Ascending aorta (tissue), 2 donors: ENCODE measurements at regions of chr17 and their contacts with region 1.

Region 1: GRCh38 chr17:40062329-40063186 is at the start of gene THRA:
- DNase-seq: peak in 1 of 2 donors; percentile 83
- H3K4me3 ChIP-seq: peak within 1 kb of the TSS; percentile 93 to 100
- H3K27ac ChIP-seq: peak within 1 kb of the TSS; percentile 86 to 91
- H3K4me1 ChIP-seq: peaks cover 10 to 33% of the 10 kb centered on the region in 2 donors
- H3K27me3 ChIP-seq: no peaks in the 10 kb centered on the region
- CTCF ChIP-seq: peak in 1 of 3 experiments; percentile 39
- total RNA-seq, gene THRA: 35.4 TPM

Region 2: DNA sequence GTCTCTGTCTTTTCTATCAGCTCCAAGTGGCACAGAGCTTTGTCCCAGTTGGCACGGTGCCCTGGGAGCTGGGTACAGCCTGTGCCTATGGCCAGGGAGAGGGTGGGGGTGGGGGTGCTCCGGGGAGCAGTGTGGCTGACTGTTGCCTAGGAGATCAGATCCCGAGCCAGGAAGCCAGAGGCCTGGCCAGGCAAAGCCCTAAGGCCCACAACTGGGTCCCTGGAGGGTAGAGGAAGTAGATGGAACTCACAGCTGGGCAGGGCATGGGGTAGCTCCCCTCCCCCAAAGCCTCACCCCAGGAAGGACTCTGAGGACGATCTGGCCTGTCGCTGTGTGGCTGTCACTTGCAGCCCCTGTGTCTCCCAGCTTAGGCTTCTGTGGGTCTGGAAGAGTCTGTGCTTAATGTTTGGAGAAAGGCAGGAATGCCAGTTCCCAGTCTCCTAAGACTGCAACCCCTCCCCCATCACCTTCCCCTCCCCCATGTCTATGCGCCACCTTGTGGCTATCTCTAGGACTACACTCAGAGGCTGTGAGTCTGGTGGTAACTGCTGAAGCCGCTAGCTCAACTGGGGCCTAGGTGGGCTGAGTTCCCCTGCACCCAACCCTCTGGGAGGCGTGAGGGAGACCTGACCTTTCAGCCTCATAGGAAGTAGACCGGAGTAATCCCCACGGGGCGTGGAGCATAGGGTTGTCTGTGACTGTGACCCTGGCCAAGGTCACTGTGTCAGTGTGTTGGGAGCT is 12.8 kb after region 1 on chr17:
- intact Hi-C with region 1: loop called (anchors 1 kb)
- DNase-seq: peak; percentile 73 to 94
- H3K4me3 ChIP-seq: peak overlapping the region; percentile 23 to 54
- H3K27ac ChIP-seq: peak overlapping the region; percentile 91
- H3K4me1 ChIP-seq: peaks cover 45 to 69% of the 10 kb centered on the region in 2 donors
- H3K27me3 ChIP-seq: no peaks in the 10 kb centered on the region
- CTCF ChIP-seq: peak; percentile 81 to 95 (median 94)

Region 3: DNA sequence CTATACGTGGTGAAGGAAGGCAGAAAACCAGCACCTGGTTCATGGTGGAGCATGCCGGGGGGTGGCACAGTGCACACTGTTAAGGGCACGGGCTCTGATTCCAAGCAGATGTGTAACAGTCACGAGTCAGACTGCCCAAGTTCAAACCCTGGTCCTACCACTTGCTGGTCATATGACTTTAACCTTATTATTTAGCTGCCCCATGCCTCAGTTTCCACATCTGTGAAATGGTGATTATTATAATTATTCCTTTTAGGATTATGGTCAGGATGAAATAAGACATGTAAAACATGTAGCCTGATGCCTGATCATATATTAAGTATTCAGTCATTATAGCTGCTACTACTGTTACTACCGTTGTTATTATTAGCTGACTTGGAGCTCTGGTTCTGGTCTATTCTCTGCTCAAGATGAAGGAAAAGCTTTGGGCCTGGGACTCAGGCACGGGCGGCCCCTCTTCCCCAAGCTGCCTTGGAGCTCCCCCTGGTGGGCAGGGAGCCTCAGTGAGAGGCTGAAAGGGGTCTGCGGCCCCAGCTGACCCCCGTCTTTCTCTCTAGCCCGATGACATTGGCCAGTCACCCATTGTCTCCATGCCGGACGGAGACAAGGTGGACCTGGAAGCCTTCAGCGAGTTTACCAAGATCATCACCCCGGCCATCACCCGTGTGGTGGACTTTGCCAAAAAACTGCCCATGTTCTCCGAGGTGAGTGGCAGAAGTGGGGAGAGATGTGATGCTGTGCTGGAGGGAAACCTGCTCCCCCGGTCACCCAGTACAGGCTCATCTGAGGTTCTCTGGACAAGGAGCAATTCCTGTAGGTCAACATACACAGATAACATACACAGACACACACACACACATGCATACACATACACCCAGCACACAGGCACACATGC is 23.8 kb after region 1 on chr17:
- intact Hi-C with region 1: loop called (anchors 1 kb)
- DNase-seq: no peak
- H3K4me3 ChIP-seq: no peak overlapping the region
- H3K27ac ChIP-seq: peak overlapping the region; percentile 26 to 38
- H3K4me1 ChIP-seq: peaks cover 0 to 16% of the 10 kb centered on the region in 2 donors
- H3K27me3 ChIP-seq: no peaks in the 10 kb centered on the region
- CTCF ChIP-seq: peak; percentile 81 to 86 (median 82)

Region 4: DNA sequence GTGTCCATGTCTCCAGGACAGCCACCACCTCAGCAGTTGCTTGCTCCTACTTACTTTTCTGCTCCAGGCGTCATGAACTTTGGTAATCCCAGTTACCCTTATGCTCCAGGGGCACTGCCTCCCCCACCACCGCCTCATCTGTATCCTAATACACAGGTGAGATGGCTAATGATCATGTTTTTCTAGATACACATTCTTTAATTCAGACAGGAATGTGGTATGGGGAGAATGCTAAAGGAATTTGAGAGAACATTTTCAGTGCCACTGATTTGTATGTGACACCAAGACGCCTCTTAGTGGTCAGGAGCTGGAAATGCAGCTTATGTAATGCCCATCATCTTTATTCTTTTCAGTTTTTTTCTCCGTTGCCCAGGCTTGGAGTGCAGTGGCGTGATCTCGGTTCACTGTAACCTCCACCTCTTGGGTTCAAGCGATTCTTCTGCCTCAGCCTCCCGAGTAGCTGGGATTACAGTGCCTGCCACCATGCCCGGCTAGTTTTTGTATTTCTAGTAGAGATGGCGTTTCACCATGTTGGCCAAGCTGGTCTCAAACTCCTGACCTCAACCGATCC is 105.8 kb after region 1 on chr17:
- intact Hi-C with region 1: loop called (anchors 2 kb)
- DNase-seq: no peak
- H3K4me3 ChIP-seq: no peak overlapping the region
- H3K27ac ChIP-seq: peak overlapping the region in 1 of 2 donors; percentile 56
- H3K4me1 ChIP-seq: no peaks in the 10 kb centered on the region
- H3K27me3 ChIP-seq: no peaks in the 10 kb centered on the region
- CTCF ChIP-seq: peak; percentile 73 to 87 (median 83)

Region 5: GRCh38 chr17:40443583-40444327 is 381.2 kb after region 1 on chr17:
- intact Hi-C with region 1: no loop called
- DNase-seq: peak in 1 of 2 donors; percentile 88
- H3K4me3 ChIP-seq: peak overlapping the region; percentile 64 to 90
- H3K27ac ChIP-seq: peak overlapping the region; percentile 89 to 92
- H3K4me1 ChIP-seq: peaks cover 14 to 44% of the 10 kb centered on the region in 2 donors
- H3K27me3 ChIP-seq: no peaks in the 10 kb centered on the region
- CTCF ChIP-seq: peak in 2 of 3 experiments; percentile 25 to 43